ENCODE measurements at regions of chr2 and their contacts with region 1.

Region 1: DNA sequence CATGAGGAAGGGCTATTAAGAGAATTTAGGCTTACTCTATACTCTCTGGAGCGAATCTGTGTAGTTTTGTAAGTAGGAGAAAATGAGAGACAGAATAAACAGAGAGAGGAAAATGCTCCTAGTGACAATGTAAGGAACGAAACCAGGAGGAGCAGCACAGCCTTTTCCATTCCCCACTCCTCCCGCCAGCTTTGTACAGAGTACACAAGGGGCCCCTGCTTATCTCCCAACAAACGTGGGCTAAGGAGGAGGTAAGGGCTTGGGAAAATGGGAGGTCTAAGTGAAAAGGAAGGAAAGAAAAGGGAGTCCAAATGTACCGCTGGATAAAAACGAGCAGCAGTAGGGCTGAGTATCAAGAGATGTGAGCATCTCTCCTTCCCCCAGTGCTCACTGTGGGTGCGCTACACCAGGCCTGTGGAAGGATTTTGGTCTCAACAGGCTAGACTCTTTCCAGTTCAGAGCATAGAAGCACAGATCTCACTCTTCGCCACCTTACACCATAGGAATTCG is 12.1 kb upstream of the IHH start:
- DNase-seq: no peak
- ATAC-seq: no peak

Region 2: DNA sequence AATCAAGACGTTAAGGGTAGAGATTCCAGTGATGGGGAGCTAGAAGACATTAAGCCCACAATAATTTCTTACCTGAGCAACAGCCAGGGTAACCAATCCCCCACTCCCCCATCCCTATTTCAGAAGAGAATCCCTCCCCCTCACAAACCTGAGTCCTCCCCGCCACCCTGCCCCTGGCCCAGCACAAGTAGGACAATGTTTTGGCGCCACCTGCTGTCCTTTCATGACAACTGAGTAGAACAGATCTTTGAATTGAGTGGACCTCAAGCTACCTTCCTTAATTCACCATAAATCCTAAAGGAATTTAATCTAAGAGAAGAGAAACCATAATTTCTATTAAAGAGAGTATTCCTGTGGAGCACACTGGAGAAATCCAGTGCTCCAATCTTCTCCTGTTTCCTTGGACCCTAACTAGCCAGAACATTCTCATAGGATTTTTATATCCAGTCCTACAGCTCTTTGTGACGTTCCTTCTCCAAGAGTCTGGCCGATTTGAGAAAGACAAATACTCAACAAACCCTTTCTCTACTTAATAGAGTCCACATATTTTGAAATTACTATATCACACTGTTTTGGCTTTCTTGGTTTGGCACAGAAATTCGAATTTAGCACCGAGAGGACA is 46.7 kb after region 1 on chr2:
- intact Hi-C with region 1: loop called (anchors 1 kb)
- DNase-seq: peak; percentile 72
- ATAC-seq: no peak

Region 3: DNA sequence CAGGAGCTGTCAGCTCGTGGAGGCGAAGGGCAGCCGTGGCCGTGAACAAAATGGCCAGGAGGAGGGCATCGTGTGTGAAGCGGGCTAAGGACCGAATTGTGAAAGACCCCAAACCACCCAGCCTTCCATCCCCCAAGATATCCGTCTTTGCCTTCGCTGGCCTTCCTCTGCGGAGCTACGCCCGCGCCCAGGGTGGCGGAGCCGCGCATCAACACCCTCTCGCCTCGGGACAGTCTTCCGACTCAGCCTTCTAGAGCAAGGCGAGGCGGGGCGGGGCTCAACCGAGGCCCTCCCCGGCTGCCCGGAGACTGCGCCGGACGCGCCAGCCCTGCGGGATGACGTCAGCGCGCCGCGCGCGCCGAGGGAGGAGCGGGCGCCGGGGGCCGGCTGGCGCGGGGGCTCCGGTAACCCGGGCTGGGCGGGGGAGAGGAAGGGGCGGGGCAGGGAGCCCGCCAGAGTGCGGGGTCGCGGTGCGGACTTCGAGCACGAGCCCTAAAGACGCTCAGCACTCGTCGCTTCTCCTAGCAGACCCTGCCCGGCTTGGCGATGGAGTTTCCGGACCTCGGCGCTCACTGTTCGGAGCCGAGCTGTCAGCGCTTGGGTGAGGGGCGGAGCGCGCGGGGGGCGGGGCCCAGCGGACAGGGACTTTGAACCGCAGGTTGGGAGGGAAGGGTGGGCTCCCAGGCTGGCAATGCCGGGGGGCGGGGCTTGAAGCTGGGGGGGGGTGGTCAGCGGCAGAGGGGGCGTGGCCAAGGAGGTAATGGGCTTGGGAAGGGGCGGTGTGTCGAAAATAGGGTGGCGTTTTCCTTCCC is 133.9 kb after region 1 on chr2 and contains the start of gene ZFAND2B:
- intact Hi-C with region 1: no loop called
- DNase-seq: peak; percentile 98
- ATAC-seq: peak; percentile 98
- total RNA-seq, gene ZFAND2B: 24.3 TPM

Region 4: GRCh38 chr2:219976871-219977270 is 904.1 kb after region 1 on chr2:
- intact Hi-C with region 1: no loop called
- DNase-seq: no peak
- ATAC-seq: no peak

Measured in Right ventricle myocardium inferior (tissue), 1 donor.